HepG2 (cell line): ENCODE measurements at regions of chr18 and their contacts with region 1.

Region 1: DNA sequence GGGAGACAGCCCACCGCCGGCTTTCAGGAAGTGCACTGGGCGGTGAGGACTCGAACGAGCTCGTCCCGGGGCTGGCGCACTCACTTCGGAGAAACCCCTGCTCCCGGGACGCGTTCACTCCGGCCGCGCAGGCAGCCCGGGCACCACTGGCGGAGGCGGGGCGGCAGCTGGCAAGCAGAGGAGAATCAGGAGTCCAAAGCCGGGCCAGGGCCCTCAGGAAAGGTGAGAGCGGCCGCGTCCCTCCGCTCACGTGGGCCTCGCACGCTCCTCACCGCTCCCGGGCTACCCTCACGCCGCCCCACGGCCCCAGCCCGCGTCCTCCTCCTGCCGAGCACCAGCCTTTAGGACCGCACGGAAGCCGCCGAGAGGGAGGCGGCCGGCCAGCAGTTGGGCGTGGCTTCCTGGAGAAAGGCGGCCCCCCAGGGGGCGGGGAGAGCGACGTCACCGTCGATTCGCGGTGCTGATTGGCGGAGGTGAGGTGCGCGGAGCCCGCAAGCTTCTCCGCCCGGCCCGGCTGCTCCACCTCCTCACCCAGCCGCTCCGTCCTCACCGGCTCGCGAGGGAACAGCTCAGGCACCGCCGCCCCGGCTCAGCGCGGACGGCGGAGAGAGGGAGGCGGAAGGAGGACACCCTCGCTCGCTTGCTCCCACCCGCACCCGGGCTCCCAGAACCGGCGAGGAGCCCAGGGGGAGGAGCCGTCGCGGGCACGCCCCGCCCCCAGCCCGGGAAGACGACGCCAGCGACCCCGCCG is at the start of gene ZCCHC2:
- DNase-seq: peak; percentile 92
- ATAC-seq: peak; percentile 89
- H3K4me3 ChIP-seq: peak within 1 kb of the TSS; percentile 92 to 98 (median 96)
- H3K27ac ChIP-seq: peak within 1 kb of the TSS; percentile 96
- H3K4me1 ChIP-seq: peaks cover 39% of the 10 kb centered on the region
- H3K27me3 ChIP-seq: no peaks in the 10 kb centered on the region; a peak in 1 of 5 replicates
- CTCF ChIP-seq: peak; percentile 24; the same call in 1 of the 2 replicates
- EP300 ChIP-seq: peak in 1 of 2 experiments; percentile 38; a peak in 1 of 4 replicates
- POLR2A ChIP-seq: peak in 1 of 2 experiments; percentile 75; a peak in 2 of 4 replicates
- RAD21 ChIP-seq: no peak; the same call in none of the 2 replicates
- total RNA-seq, gene ZCCHC2: 76.1 and 76.5 TPM in 2 replicates

Region 2: GRCh38 chr18:62186774-62187542 is 335.7 kb before region 1 on chr18 and contains the starts of genes PIGN and RELCH:
- CTCF ChIA-PET with region 1: no interaction called
- POLR2A ChIA-PET with region 1: no interaction called
- in situ Hi-C with region 1: no loop called
- intact Hi-C with region 1: loop called (anchors 10 kb)
- DNase-seq: peak; percentile 98
- ATAC-seq: peak; percentile 93
- H3K4me3 ChIP-seq: peak within 1 kb of the TSS; percentile 92 to 99 (median 97)
- H3K27ac ChIP-seq: peak within 1 kb of the TSS; percentile 89
- H3K4me1 ChIP-seq: peaks cover 45% of the 10 kb centered on the region
- H3K27me3 ChIP-seq: no peaks in the 10 kb centered on the region; a peak in 1 of 5 replicates
- CTCF ChIP-seq: no peak
- EP300 ChIP-seq: no peak
- POLR2A ChIP-seq: peak; percentile 85 to 88
- RAD21 ChIP-seq: 0 out of 2 replicates have a peak, but pooled peaks have one; percentile 14
- total RNA-seq, gene PIGN: 33.6 and 33.8 TPM in 2 replicates
- total RNA-seq, gene RELCH: 31.7 and 37.7 TPM in 2 replicates

Region 3: GRCh38 chr18:62339106-62339988 is 183.3 kb before region 1 on chr18:
- CTCF ChIA-PET with region 1: no interaction called
- POLR2A ChIA-PET with region 1: no interaction called
- in situ Hi-C with region 1: no loop called
- intact Hi-C with region 1: no loop called
- DNase-seq: no peak
- ATAC-seq: no peak
- H3K4me3 ChIP-seq: no peak overlapping the region
- H3K27ac ChIP-seq: no peak overlapping the region
- H3K4me1 ChIP-seq: no peaks in the 10 kb centered on the region
- H3K27me3 ChIP-seq: no peaks in the 10 kb centered on the region
- CTCF ChIP-seq: no peak
- EP300 ChIP-seq: no peak
- POLR2A ChIP-seq: no peak
- RAD21 ChIP-seq: no peak

Region 4: DNA sequence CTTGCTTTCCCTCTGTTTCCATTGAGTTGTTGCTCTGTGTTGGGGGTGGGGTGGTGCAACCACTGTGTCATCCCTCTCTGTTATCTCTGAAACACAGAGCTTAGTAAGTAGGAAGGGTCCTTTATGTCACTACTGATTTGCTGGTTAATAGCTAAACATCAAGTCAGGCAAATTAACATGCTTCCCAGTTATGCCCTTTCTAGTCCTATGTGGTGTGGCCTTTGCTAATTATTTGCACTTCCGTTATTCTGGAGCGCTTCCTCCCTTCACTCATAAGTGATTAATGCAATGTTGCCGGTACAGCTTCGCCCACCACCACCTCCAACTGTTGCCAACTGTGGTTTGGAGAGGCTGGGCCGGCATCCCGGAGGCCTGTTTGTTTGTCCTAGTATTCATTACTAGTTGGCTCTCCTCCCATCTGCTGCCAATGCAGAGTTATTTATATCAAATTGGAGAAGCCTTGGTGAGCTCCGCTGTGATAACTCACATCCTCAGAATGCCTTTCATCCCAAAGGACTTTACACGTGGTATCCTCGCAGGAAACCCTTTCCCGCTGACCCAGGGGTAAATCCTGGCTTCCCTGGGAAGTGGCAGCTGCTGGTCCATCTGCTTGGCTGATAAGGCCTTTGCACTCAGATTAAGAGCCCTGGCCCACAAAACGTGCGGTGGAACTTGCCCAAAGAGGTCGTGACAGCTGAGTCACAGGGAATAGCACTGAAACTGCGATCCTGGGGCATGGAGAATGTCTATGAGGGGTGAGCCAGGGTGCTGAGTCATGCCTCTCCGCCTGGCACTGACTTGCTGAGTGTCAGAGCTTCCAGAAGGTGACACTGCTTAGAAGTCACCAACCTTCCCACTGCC is 71.9 kb before region 1 on chr18:
- CTCF ChIA-PET with region 1: no interaction called
- POLR2A ChIA-PET with region 1: interaction called, 41 read pairs
- in situ Hi-C with region 1: loop called (anchors 10 kb)
- intact Hi-C with region 1: no loop called
- DNase-seq: peak; percentile 63
- ATAC-seq: peak; percentile 11; the same call in 2 of the 3 replicates
- H3K4me3 ChIP-seq: no peak overlapping the region; a peak in 1 of 6 replicates
- H3K27ac ChIP-seq: peak overlapping the region; percentile 86
- H3K4me1 ChIP-seq: peaks cover 81% of the 10 kb centered on the region
- H3K27me3 ChIP-seq: no peaks in the 10 kb centered on the region
- CTCF ChIP-seq: no peak
- EP300 ChIP-seq: no peak
- POLR2A ChIP-seq: no peak
- RAD21 ChIP-seq: no peak

Region 5: GRCh38 chr18:62486304-62486964 is 36.2 kb before region 1 on chr18:
- CTCF ChIA-PET with region 1: no interaction called
- POLR2A ChIA-PET with region 1: no interaction called
- in situ Hi-C with region 1: no loop called
- intact Hi-C with region 1: loop called (anchors 1 kb)
- DNase-seq: peak; percentile 69
- ATAC-seq: peak; percentile 90
- H3K4me3 ChIP-seq: peak overlapping the region in 1 of 3 experiments; percentile 26; a peak in 1 of 6 replicates
- H3K27ac ChIP-seq: no peak overlapping the region
- H3K4me1 ChIP-seq: peaks cover 29% of the 10 kb centered on the region
- H3K27me3 ChIP-seq: no peaks in the 10 kb centered on the region
- CTCF ChIP-seq: no peak
- EP300 ChIP-seq: peak in 1 of 2 experiments; percentile 56; a peak in 1 of 4 replicates
- POLR2A ChIP-seq: no peak
- RAD21 ChIP-seq: no peak

Region 6: DNA sequence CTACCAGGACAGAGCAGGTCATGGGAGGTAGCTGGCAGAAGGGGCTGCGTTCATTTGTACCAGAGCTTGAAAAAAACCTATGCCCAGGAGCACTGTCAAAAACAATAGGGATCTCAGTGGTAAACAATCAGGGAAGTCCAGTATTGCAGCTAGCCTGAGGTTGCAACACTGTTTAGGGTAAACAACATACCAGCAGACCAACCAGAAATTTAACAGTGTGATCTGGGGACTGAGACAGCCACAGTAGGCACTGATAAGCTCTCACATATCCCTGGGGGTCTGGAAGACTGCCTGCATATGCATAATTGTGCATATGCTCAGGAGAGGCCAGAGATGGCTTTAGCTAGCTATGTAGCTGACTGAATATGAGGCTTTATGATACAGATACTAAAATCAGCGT is 11.9 kb before region 1 on chr18:
- CTCF ChIA-PET with region 1: no interaction called
- POLR2A ChIA-PET with region 1: interaction called, 26 read pairs
- in situ Hi-C with region 1: no loop called
- intact Hi-C with region 1: no loop called
- DNase-seq: peak; percentile 72
- ATAC-seq: peak; percentile 94
- H3K4me3 ChIP-seq: no peak overlapping the region; a peak in 1 of 6 replicates
- H3K27ac ChIP-seq: peak overlapping the region; percentile 74
- H3K4me1 ChIP-seq: peaks cover 50% of the 10 kb centered on the region
- H3K27me3 ChIP-seq: no peaks in the 10 kb centered on the region
- CTCF ChIP-seq: no peak
- EP300 ChIP-seq: peak in 1 of 2 experiments; percentile 60; a peak in 1 of 4 replicates
- POLR2A ChIP-seq: 0 out of 4 replicates have a peak, but pooled peaks of 1 of the 2 experiments have one; percentile 27
- RAD21 ChIP-seq: no peak